Natural killer cell (primary cell): ENCODE measurements at regions of chr20 and their contacts with region 1.

Region 1: GRCh38 chr20:17066902-17067301 is 159.9 kb upstream of the PCSK2 start:
- DNase-seq: no peak
- ATAC-seq: no peak
- H3K4me3 ChIP-seq: no peak overlapping the region
- H3K4me3 Mint-ChIP-seq: no peak overlapping the region
- H3K27ac ChIP-seq: no peak overlapping the region
- H3K27ac Mint-ChIP-seq: no peak overlapping the region
- H3K4me1 ChIP-seq: no peaks in the 10 kb centered on the region
- H3K4me1 Mint-ChIP-seq: no peaks in the 10 kb centered on the region
- H3K27me3 ChIP-seq: no peaks in the 10 kb centered on the region
- H3K27me3 Mint-ChIP-seq: no peaks in the 10 kb centered on the region
- CTCF ChIP-seq: no peak

Region 2: GRCh38 chr20:17003170-17003870 is 63.6 kb before region 1 on chr20:
- intact Hi-C with region 1: loop called (anchors 10 kb)
- DNase-seq: no peak
- ATAC-seq: no peak
- H3K4me3 ChIP-seq: no peak overlapping the region
- H3K4me3 Mint-ChIP-seq: no peak overlapping the region
- H3K27ac ChIP-seq: no peak overlapping the region
- H3K27ac Mint-ChIP-seq: no peak overlapping the region
- H3K4me1 ChIP-seq: no peaks in the 10 kb centered on the region
- H3K4me1 Mint-ChIP-seq: no peaks in the 10 kb centered on the region
- H3K27me3 ChIP-seq: no peaks in the 10 kb centered on the region
- H3K27me3 Mint-ChIP-seq: no peaks in the 10 kb centered on the region
- CTCF ChIP-seq: no peak